ENCODE measurements at regions of chr12 and their contacts with region 1.

Region 1: GRCh38 chr12:14960548-14961465 is 594 bp downstream of the ARHGDIB start:
- DNase-seq: peak in 7 of 9 donors; percentile 41 to 82 (median 77)
- ATAC-seq: peak; percentile 54
- H3K4me3 ChIP-seq: peak overlapping the region; percentile 84
- H3K4me3 Mint-ChIP-seq: peak overlapping the region; percentile 88 to 100 (median 97)
- H3K27ac ChIP-seq: peak overlapping the region; percentile 96
- H3K27ac Mint-ChIP-seq: peak overlapping the region; percentile 94 to 100 (median 97)
- H3K4me1 ChIP-seq: peaks cover 42 to 50% of the 10 kb centered on the region in 2 donors
- H3K4me1 Mint-ChIP-seq: peaks cover 42 to 68% (median 61%) of the 10 kb centered on the region in 7 donors
- H3K27me3 ChIP-seq: no peaks in the 10 kb centered on the region
- H3K27me3 Mint-ChIP-seq: peaks cover 0 to 2% (median 0%) of the 10 kb centered on the region in 5 donors

Region 2: GRCh38 chr12:14803011-14803829 is 157.6 kb before region 1 on chr12 and contains the starts of genes C12orf60 and WBP11:
- CTCF ChIA-PET with region 1: no interaction called
- POLR2A ChIA-PET with region 1: interaction called, 7 read pairs
- intact Hi-C with region 1: loop called (anchors 1 kb)
- DNase-seq: peak; percentile 56 to 95 (median 91)
- ATAC-seq: peak; percentile 98
- H3K4me3 ChIP-seq: peak within 1 kb of the TSS; percentile 80
- H3K4me3 Mint-ChIP-seq: no peak within 1 kb of the TSS
- H3K27ac ChIP-seq: peak within 1 kb of the TSS; percentile 97
- H3K27ac Mint-ChIP-seq: no peak within 1 kb of the TSS
- H3K4me1 ChIP-seq: peaks cover 14 to 19% of the 10 kb centered on the region in 2 donors
- H3K4me1 Mint-ChIP-seq: peaks cover 0 to 26% (median 10%) of the 10 kb centered on the region in 7 donors
- H3K27me3 ChIP-seq: no peaks in the 10 kb centered on the region
- H3K27me3 Mint-ChIP-seq: no peaks in the 10 kb centered on the region
- total RNA-seq, gene C12orf60: 0.22 to 1.7 (median 1.2) TPM in 4 of 5 experiments, not detected in the other
- total RNA-seq, gene WBP11: 77.9 to 129 (median 90.4) TPM

Region 3: DNA sequence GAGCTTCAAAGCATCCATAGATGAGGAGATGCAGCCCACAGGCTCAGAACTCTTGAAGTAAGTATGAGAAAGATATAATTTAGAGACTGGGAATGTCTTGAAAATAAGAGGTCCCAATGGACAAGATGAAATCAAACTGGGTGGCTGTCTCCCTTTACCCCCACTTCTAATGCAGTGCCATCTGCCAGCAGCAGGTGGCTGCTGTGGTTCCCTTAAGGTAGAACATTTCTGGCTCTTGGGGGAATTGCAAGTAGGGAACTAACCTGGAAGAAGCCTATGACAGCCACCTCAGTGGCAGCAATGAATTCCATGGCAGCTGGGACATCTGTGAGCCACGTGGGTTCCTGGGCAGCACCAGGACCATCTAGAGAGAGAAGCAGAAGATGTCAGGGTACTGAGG is 23.1 kb before region 1 on chr12:
- CTCF ChIA-PET with region 1: interaction called, 4 read pairs
- POLR2A ChIA-PET with region 1: interaction called, 60 read pairs
- intact Hi-C with region 1: loop called in 1 of 2 experiments (anchors 1 kb)
- DNase-seq: no peak
- ATAC-seq: peak; percentile 57
- H3K4me3 ChIP-seq: no peak overlapping the region
- H3K4me3 Mint-ChIP-seq: peak overlapping the region in 5 of 10 donors; percentile 3 to 59 (median 25)
- H3K27ac ChIP-seq: peak overlapping the region; percentile 36
- H3K27ac Mint-ChIP-seq: peak overlapping the region; percentile 56 to 94 (median 84)
- H3K4me1 ChIP-seq: peaks cover 0 to 22% of the 10 kb centered on the region in 2 donors
- H3K4me1 Mint-ChIP-seq: peaks cover 34 to 81% (median 69%) of the 10 kb centered on the region in 7 donors
- H3K27me3 ChIP-seq: no peaks in the 10 kb centered on the region
- H3K27me3 Mint-ChIP-seq: no peaks in the 10 kb centered on the region

Region 4: DNA sequence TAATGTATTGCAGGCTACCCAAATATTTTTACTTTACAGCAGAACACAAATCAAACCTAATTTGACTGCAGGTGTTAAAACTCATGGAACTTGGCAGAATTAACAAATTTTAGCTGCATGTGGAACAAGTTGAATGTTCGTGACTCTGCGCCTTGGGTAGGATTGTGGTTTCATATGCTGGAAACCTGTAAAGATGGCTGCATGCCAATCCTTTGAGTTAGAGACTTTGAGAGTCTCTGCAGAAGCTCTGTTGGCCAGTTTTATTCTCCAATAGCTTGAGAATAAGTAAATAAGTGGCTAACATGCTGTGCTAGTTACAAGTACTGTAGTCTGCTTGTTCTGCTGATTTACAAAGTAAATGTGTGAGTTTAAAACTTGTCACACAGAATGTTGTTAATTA is 89.9 kb after region 1 on chr12:
- CTCF ChIA-PET with region 1: no interaction called
- POLR2A ChIA-PET with region 1: no interaction called
- intact Hi-C with region 1: loop called in 1 of 2 experiments (anchors 5 kb)
- DNase-seq: peak in 3 of 9 donors; percentile 34 to 56 (median 36)
- ATAC-seq: no peak
- H3K4me3 ChIP-seq: no peak overlapping the region
- H3K4me3 Mint-ChIP-seq: peak overlapping the region in 3 of 10 donors; percentile 50 to 61 (median 54)
- H3K27ac ChIP-seq: no peak overlapping the region
- H3K27ac Mint-ChIP-seq: peak overlapping the region in 1 of 9 donors; percentile 57
- H3K4me1 ChIP-seq: peaks cover 0 to 3% of the 10 kb centered on the region in 2 donors
- H3K4me1 Mint-ChIP-seq: peaks cover 0 to 31% (median 0%) of the 10 kb centered on the region in 7 donors
- H3K27me3 ChIP-seq: no peaks in the 10 kb centered on the region
- H3K27me3 Mint-ChIP-seq: peaks cover 0 to 18% (median 12%) of the 10 kb centered on the region in 5 donors

Region 5: DNA sequence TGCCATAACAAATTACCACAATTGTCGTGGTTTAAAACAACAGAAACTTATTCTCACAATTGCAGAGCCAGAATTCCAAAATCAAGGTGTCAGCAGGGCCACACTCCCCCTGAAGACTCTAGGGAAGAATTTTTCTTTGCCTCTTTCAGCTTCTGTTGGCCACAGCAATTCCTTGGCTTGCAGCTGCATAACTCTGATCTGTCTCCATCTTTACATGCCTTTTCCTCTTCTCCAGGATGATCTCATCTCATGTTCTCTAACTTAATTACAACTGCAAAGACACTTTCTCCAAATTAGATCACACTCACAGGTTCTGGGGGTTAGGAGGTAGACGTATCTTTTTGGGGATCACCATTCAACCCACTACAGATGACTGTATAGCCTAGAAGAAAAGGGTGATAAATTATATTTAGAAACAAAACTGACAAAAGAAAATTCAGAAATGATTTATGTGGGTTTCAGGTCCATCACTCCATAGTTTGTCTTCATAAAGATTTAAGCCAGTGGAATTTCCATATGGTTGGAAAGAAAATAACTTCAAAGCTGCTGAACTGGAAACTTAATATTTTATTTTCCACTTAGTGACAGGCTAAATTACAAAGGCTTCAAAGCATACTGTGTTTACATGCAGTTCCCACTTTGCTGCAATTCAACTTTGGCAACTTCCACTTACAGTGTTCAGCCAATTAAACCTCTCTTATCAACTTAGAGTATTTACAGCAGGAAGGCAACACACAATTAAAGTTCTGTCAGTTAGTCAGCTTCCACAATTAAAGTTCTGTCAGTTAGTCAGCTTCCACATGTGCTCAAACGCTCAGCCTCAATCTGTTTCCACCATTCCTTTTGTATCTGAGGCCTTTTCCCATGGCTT is 615.1 kb after region 1 on chr12:
- CTCF ChIA-PET with region 1: no interaction called
- POLR2A ChIA-PET with region 1: no interaction called
- intact Hi-C with region 1: loop called in 1 of 2 experiments (anchors 5 kb)
- DNase-seq: no peak
- ATAC-seq: no peak
- H3K4me3 ChIP-seq: no peak overlapping the region
- H3K4me3 Mint-ChIP-seq: peak overlapping the region in 3 of 10 donors; percentile 0 to 48 (median 21)
- H3K27ac ChIP-seq: no peak overlapping the region
- H3K27ac Mint-ChIP-seq: peak overlapping the region in 6 of 9 donors; percentile 6 to 74 (median 24)
- H3K4me1 ChIP-seq: peaks cover 0 to 7% of the 10 kb centered on the region in 2 donors
- H3K4me1 Mint-ChIP-seq: peaks cover 11 to 63% (median 47%) of the 10 kb centered on the region in 7 donors
- H3K27me3 ChIP-seq: no peaks in the 10 kb centered on the region
- H3K27me3 Mint-ChIP-seq: no peaks in the 10 kb centered on the region

Measured in naive thymus-derived CD4-positive, alpha-beta T cell (primary cell).